ENCODE measurements at regions of chr9 and their contacts with region 1.

Region 1: DNA sequence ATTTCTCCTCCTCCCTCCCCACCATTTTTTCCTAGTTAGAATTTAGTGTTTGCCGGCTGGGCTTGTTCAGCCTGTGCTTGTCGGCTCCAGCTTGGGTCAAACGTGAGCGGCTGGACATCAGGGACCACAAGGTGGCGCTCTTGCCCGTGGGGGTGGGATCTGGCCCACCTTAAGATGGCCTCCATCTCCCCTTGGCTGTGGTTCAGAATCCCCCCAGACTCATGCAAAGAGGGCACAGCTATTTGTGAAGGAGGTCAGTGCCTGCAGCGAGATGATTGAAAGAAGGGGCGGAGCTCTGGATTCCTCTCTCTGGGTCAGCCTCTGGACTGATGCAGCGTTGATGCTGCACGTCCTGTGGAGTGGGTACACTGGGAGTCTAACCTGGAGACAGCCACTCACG is 283.3 kb upstream of the TUT7 start:
- DNase-seq: peak; percentile 47 to 92
- H3K4me3 ChIP-seq: no peak overlapping the region
- H3K27ac ChIP-seq: no peak overlapping the region
- H3K4me1 ChIP-seq: no peaks in the 10 kb centered on the region; a peak in 1 of 7 replicates
- H3K27me3 ChIP-seq: no peaks in the 10 kb centered on the region
- CTCF ChIP-seq: peak; percentile 88 to 96 (median 89)
- EP300 ChIP-seq: no peak
- POLR2A ChIP-seq: no peak
- RAD21 ChIP-seq: peak; percentile 97

Region 2: DNA sequence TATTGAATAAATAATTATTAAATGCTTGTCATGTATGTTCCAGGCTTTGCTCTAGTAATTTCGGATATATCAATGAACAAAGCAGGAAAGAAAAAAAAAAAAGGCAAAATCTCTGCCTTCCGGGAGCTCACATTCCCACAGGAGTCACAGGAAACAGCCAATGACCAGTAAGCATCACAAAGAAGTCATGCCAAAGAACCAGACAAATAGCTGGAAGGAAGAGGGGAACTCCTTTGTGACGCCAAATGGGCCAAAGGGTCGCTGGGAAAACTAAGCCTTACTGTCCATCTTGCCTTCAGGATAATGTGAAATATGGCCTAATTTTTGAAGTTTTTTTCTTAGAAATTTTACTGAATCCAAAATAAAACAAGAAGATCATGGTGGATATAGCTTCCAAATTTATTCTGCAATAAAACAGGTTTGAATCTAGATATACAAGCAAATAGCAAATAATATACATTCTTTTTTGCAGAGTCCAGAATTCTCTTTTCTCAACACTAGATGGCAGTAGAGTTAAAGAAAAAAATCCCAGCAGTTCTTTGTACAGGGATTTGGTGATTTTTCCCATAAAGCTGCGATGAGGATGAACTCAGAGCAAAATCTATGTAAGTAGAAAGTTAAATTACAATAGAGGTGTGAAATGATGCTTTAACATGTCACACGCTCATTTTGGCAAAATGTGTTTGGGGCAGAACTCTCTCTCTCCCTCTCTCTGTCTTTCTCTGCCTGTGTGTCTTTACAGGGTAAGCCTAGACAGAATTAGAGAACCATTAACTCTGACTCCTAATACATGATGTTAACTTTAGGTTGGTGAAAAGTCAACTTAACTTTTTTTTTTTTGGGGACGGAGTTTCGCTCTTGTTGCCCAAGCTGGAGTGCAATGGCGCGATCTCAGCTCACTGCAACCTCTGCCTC is 223.3 kb before region 1 on chr9:
- CTCF ChIA-PET with region 1: interaction called, 14 read pairs
- POLR2A ChIA-PET with region 1: no interaction called
- DNase-seq: no peak
- H3K4me3 ChIP-seq: no peak overlapping the region
- H3K27ac ChIP-seq: no peak overlapping the region
- H3K4me1 ChIP-seq: no peaks in the 10 kb centered on the region
- H3K27me3 ChIP-seq: peaks cover 18 to 36% (median 32%) of the 10 kb centered on the region in 4 experiments
- CTCF ChIP-seq: peak in 2 of 3 experiments; percentile 33 to 36; a peak in 2 of 4 replicates
- EP300 ChIP-seq: no peak
- POLR2A ChIP-seq: no peak
- RAD21 ChIP-seq: peak; percentile 61 to 64

Region 3: DNA sequence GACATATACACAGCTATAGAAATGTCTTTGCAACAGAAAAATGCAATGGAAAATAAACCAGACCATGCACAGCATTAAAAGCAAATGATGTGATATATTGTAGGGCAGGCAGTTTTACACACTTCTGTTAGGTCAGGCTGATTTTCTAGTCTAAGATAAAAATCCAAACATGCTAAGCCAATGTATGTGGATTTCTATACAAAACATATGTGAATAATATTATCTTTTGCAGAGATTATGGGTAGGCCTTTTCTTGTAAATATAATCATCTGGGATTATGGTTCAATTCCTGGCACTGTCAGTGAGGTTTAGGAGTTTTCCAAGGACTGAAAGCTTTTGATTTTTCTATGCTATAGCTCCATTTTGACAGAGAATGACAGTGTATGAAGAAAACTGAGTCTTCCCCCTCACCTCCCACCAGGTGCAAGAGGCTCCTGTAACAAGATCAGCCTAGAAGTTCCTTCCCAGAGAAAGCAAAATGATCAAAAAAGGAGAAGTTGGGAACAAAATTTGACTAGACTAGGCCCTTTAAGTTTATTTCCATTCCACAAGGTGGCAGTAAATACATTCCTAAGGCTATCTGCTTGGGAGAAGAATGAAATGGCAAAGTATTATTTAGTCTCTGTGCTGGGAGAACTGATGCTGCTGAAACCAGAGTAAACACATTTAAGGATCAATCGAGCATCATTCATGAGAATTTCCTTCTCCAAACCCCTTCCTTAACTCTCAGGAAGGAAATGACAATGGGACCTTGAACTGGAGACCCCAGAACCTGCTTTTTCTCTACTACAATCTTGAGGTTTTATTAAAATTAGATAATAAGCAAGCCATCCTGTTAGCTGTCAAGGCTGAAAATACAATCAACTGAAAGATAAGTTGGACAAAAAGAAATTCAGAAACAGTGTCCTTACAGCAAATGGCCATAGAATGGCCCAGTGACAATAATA is 150.4 kb before region 1 on chr9:
- CTCF ChIA-PET with region 1: interaction called, 10 read pairs
- POLR2A ChIA-PET with region 1: no interaction called
- DNase-seq: no peak
- H3K4me3 ChIP-seq: no peak overlapping the region
- H3K27ac ChIP-seq: no peak overlapping the region
- H3K4me1 ChIP-seq: no peaks in the 10 kb centered on the region
- H3K27me3 ChIP-seq: no peaks in the 10 kb centered on the region
- CTCF ChIP-seq: peak in 2 of 3 experiments; percentile 49 to 58; a peak in 2 of 4 replicates
- EP300 ChIP-seq: no peak
- POLR2A ChIP-seq: no peak
- RAD21 ChIP-seq: peak; percentile 86 to 88

Region 4: GRCh38 chr9:86557063-86557724 is 80.3 kb before region 1 on chr9:
- CTCF ChIA-PET with region 1: no interaction called
- POLR2A ChIA-PET with region 1: no interaction called
- DNase-seq: no peak
- H3K4me3 ChIP-seq: no peak overlapping the region
- H3K27ac ChIP-seq: no peak overlapping the region
- H3K4me1 ChIP-seq: peaks cover 0 to 3% (median 0%) of the 10 kb centered on the region in 4 experiments; a peak in 1 of 7 replicates
- H3K27me3 ChIP-seq: no peaks in the 10 kb centered on the region
- CTCF ChIP-seq: no peak
- EP300 ChIP-seq: no peak
- POLR2A ChIP-seq: no peak
- RAD21 ChIP-seq: peak; percentile 2 to 12; a peak in 2 of 4 replicates

Region 5: DNA sequence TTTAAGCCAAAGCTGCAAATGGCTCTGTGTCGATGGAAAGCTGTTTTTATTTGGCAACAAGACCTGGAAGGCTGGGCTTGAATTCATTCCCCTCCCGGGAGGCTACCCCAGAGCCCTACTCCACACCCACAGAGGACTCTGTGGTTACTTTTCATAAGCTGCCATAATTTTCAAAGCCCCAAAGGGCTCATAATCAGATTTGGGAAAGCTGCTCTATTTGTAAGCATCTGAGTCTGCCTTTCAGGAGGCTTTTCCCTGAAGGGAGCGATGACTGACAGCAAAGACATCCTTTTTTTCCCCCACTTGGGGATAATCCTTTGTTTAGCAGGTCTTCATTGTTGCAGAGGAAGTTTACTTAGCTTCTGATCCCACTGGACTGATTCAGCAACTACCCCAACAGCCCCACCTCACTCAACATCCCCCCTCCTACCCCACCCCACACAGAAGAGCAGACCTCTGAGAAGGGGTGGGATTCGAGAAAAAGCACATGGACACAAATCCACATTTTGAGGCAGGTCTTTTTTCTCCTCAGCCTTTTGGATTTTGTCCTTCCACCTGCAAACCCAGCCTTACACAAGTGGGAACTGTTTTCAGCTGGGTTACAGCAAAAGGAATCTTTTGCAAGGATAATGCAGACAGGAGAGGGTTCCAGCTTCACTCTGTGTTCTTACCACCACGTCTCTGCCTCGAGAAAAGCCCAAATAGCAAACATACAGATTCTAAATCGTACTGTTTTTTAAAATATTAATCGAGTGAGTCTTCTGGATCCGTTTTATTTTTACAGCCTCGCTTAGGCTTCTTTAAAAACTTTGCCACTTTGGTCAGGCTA is 38.9 kb before region 1 on chr9:
- CTCF ChIA-PET with region 1: no interaction called
- POLR2A ChIA-PET with region 1: no interaction called
- DNase-seq: no peak
- H3K4me3 ChIP-seq: no peak overlapping the region
- H3K27ac ChIP-seq: no peak overlapping the region
- H3K4me1 ChIP-seq: peaks cover 0 to 3% (median 2%) of the 10 kb centered on the region in 4 experiments; a peak in 4 of 7 replicates
- H3K27me3 ChIP-seq: no peaks in the 10 kb centered on the region
- CTCF ChIP-seq: no peak
- EP300 ChIP-seq: no peak
- POLR2A ChIP-seq: no peak
- RAD21 ChIP-seq: no peak

Region 6: GRCh38 chr9:86626802-86627201 is 10.7 kb before region 1 on chr9:
- CTCF ChIA-PET with region 1: interaction called, 33 read pairs
- POLR2A ChIA-PET with region 1: no interaction called
- DNase-seq: no peak
- H3K4me3 ChIP-seq: no peak overlapping the region
- H3K27ac ChIP-seq: no peak overlapping the region
- H3K4me1 ChIP-seq: no peaks in the 10 kb centered on the region
- H3K27me3 ChIP-seq: no peaks in the 10 kb centered on the region
- CTCF ChIP-seq: no peak
- EP300 ChIP-seq: no peak
- POLR2A ChIP-seq: no peak
- RAD21 ChIP-seq: peak; percentile 10 to 27; a peak in 3 of 4 replicates

Region 7: GRCh38 chr9:87324613-87325194 is 687.2 kb after region 1 on chr9:
- CTCF ChIA-PET with region 1: interaction called, 16 read pairs
- POLR2A ChIA-PET with region 1: no interaction called
- DNase-seq: no peak
- H3K4me3 ChIP-seq: no peak overlapping the region
- H3K27ac ChIP-seq: no peak overlapping the region
- H3K4me1 ChIP-seq: no peaks in the 10 kb centered on the region
- H3K27me3 ChIP-seq: no peaks in the 10 kb centered on the region
- CTCF ChIP-seq: peak in 2 of 3 experiments; percentile 63 to 65; a peak in 2 of 4 replicates
- EP300 ChIP-seq: no peak
- POLR2A ChIP-seq: no peak
- RAD21 ChIP-seq: peak; percentile 96

Measured in H1 (cell line).